ENCODE measurements at regions of chr7 and their contacts with region 1.

Region 1: GRCh38 chr7:95859434-95859833 is 87.1 kb downstream of the DYNC1I1 start:
- DNase-seq: no peak
- ATAC-seq: peak in 4 of 8 donors; percentile 35 to 79 (median 48)
- H3K4me3 ChIP-seq: no peak overlapping the region
- H3K27ac ChIP-seq: no peak overlapping the region
- H3K4me1 ChIP-seq: peaks cover 0 to 5% (median 0%) of the 10 kb centered on the region in 9 donors
- H3K27me3 ChIP-seq: no peaks in the 10 kb centered on the region
- CTCF ChIP-seq: no peak

Region 2: GRCh38 chr7:95772298-95772770 is 87.1 kb before region 1 on chr7 and contains the start of gene DYNC1I1:
- intact Hi-C with region 1: loop called in 1 of 10 experiments (anchors 10 kb)
- DNase-seq: peak; percentile 77 to 84
- ATAC-seq: peak; percentile 94 to 99 (median 96)
- H3K4me3 ChIP-seq: peak within 1 kb of the TSS; percentile 32 to 95 (median 71)
- H3K27ac ChIP-seq: peak within 1 kb of the TSS; percentile 43 to 87 (median 76)
- H3K4me1 ChIP-seq: peaks cover 0 to 23% (median 14%) of the 10 kb centered on the region in 9 donors
- H3K27me3 ChIP-seq: peaks cover 0 to 17% (median 0%) of the 10 kb centered on the region in 7 donors
- CTCF ChIP-seq: peak in 3 of 9 donors; percentile 29 to 36 (median 31)
- total RNA-seq, gene DYNC1I1: 18.8 to 43.4 (median 37.6) TPM

Region 3: DNA sequence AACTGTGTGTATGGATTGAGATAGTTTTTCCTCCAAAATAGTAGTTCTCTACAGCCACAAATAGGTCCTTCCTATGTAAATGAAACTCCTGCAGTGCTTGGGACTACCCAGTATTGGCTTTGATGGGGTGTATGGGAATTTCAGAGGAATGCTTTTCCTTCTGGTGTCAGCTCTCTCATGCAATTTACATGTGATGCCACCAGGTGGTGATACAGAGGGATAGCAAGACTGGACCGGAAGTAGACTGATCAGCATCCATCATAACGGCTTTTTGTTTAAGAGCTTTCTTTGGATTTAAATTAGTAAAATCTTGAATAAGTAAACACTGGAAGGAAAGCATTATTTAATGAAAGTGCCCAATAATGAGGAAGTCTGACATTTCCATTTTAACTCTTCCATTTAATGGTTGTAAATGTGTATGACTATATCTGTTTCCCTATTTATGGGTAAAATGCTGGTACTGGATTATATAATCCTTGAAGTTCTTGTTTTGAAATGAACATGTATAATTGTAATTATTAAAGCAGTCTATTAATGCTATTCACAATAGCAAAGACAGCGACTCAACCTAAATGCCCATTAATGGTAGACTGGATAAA is 64.4 kb before region 1 on chr7:
- intact Hi-C with region 1: no loop called
- DNase-seq: no peak
- ATAC-seq: no peak
- H3K4me3 ChIP-seq: no peak overlapping the region
- H3K27ac ChIP-seq: no peak overlapping the region
- H3K4me1 ChIP-seq: no peaks in the 10 kb centered on the region
- H3K27me3 ChIP-seq: no peaks in the 10 kb centered on the region
- CTCF ChIP-seq: peak in 7 of 9 donors; percentile 7 to 47 (median 22)

Region 4: DNA sequence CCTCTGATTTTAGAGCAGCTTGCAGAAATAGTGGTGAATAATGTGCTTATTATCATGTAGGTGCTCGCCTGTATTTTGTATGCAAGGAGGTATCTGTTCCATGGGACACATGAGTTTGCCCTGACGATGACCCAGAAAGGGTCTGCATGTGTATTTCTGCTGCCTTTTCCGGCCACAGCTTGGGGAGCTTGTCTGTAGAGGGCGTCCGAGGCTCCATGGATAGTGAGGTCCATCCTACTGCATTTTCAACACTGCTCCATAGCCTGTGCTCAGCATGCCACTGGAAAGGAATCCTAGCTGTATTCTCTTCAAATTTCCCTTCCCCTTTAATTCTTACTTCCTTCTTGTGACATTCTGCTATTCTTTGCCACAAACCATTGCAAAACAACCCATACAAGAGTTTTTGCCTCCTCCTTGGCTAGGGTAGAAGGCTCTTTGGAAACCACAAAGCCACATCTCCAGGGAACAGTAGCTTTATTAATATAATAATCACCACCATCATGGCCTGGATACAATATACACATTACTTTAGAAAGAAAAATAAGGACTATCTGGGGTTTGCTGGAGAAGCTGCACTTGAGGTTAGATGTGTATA is 40.6 kb after region 1 on chr7:
- intact Hi-C with region 1: no loop called
- DNase-seq: no peak
- ATAC-seq: no peak
- H3K4me3 ChIP-seq: no peak overlapping the region
- H3K27ac ChIP-seq: no peak overlapping the region
- H3K4me1 ChIP-seq: peaks cover 0 to 22% (median 13%) of the 10 kb centered on the region in 9 donors
- H3K27me3 ChIP-seq: peaks cover 0 to 7% (median 0%) of the 10 kb centered on the region in 7 donors
- CTCF ChIP-seq: no peak

Region 5: GRCh38 chr7:96599288-96599936 is 740.0 kb after region 1 on chr7:
- intact Hi-C with region 1: no loop called
- DNase-seq: no peak
- ATAC-seq: no peak
- H3K4me3 ChIP-seq: no peak overlapping the region
- H3K27ac ChIP-seq: no peak overlapping the region
- H3K4me1 ChIP-seq: peaks cover 0 to 4% (median 0%) of the 10 kb centered on the region in 9 donors
- H3K27me3 ChIP-seq: no peaks in the 10 kb centered on the region
- CTCF ChIP-seq: no peak